MCF 10A (cell line): ENCODE measurements at regions of chr19 and their contacts with region 1.

Region 1: GRCh38 chr19:42032431-42032830 is 37.6 kb downstream of the GRIK5 start:
- DNase-seq: no peak
- H3K4me3 Mint-ChIP-seq: no peak overlapping the region
- H3K27ac Mint-ChIP-seq: no peak overlapping the region
- H3K4me1 Mint-ChIP-seq: no peaks in the 10 kb centered on the region
- H3K27me3 Mint-ChIP-seq: no peaks in the 10 kb centered on the region
- CTCF ChIP-seq: no peak

Region 2: GRCh38 chr19:41959056-41960053 is 73.1 kb before region 1 on chr19 and contains the start of gene RABAC1:
- CTCF ChIA-PET with region 1: interaction called, 5 read pairs
- POLR2A ChIA-PET with region 1: interaction called, 3 read pairs
- intact Hi-C with region 1: loop called (anchors 2 kb)
- DNase-seq: peak; percentile 89
- H3K4me3 Mint-ChIP-seq: peak within 1 kb of the TSS; percentile 74
- H3K27ac Mint-ChIP-seq: peak within 1 kb of the TSS; percentile 78
- H3K4me1 Mint-ChIP-seq: peaks cover 19% of the 10 kb centered on the region
- H3K27me3 Mint-ChIP-seq: no peaks in the 10 kb centered on the region
- CTCF ChIP-seq: peak; percentile 19
- total RNA-seq, gene RABAC1: 75.4 and 104 TPM in 2 replicates

Region 3: GRCh38 chr19:41998246-41999020 is 34.0 kb before region 1 on chr19:
- CTCF ChIA-PET with region 1: interaction called, 9 read pairs
- POLR2A ChIA-PET with region 1: no interaction called
- intact Hi-C with region 1: loop called (anchors 5 kb)
- DNase-seq: peak; percentile 23
- H3K4me3 Mint-ChIP-seq: no peak overlapping the region
- H3K27ac Mint-ChIP-seq: no peak overlapping the region
- H3K4me1 Mint-ChIP-seq: peaks cover 6% of the 10 kb centered on the region
- H3K27me3 Mint-ChIP-seq: peaks cover 89% of the 10 kb centered on the region
- CTCF ChIP-seq: peak; percentile 59

Region 4: GRCh38 chr19:42045575-42045974 is 13.1 kb after region 1 on chr19:
- CTCF ChIA-PET with region 1: interaction called, 10 read pairs
- POLR2A ChIA-PET with region 1: interaction called, 13 read pairs
- intact Hi-C with region 1: no loop called
- DNase-seq: no peak
- H3K4me3 Mint-ChIP-seq: no peak overlapping the region
- H3K27ac Mint-ChIP-seq: no peak overlapping the region
- H3K4me1 Mint-ChIP-seq: peaks cover 6% of the 10 kb centered on the region
- H3K27me3 Mint-ChIP-seq: no peaks in the 10 kb centered on the region
- CTCF ChIP-seq: no peak

Region 5: DNA sequence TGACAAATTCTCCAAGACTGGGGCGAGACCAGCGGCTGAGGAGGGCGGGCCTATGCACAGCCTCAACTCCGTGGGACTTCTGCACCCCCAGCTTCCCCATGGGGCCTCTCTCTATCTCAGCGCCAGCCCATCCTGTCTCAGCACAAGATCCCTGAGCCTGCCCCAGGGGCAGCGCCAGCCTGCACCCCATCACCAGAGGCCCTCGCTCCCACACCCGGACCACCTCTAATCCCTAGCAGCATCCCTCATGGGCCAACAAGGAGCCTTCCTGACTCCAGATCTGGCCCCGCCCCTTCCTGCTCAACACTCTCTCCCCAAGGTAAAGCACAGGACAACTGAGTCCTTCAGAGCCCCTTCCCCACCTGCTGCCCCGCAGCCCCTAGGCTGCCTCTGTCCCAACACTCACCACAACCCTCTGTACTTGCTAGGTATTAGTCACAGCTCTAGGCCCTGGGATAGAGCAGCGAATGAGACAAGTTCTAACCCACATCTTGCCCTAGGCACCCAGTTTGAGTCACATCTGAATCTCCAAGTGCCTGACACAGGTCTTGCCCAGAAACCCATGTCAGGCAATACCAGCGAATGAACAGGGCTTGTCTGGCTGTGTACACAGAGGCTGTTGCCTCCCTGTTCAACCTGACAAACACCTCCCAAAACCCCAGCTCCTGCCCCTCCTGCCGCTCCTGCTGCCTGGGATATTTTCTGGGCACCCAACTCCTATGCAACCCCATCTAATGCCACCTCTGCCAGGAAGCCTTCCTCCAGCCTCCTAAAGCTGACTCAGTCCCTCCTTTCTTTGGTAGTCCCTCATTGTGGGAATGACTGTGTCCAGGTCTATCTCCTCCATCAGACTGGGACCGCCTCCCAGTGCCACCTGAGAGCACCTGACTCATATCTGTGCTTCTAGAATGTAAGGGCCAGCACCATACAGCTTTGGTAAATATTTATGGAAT is 19.0 kb after region 1 on chr19:
- CTCF ChIA-PET with region 1: interaction called, 8 read pairs
- POLR2A ChIA-PET with region 1: interaction called, 13 read pairs
- intact Hi-C with region 1: no loop called
- DNase-seq: peak; percentile 97
- H3K4me3 Mint-ChIP-seq: peak overlapping the region; percentile 1
- H3K27ac Mint-ChIP-seq: peak overlapping the region; percentile 86
- H3K4me1 Mint-ChIP-seq: peaks cover 31% of the 10 kb centered on the region
- H3K27me3 Mint-ChIP-seq: no peaks in the 10 kb centered on the region
- CTCF ChIP-seq: no peak

Region 6: DNA sequence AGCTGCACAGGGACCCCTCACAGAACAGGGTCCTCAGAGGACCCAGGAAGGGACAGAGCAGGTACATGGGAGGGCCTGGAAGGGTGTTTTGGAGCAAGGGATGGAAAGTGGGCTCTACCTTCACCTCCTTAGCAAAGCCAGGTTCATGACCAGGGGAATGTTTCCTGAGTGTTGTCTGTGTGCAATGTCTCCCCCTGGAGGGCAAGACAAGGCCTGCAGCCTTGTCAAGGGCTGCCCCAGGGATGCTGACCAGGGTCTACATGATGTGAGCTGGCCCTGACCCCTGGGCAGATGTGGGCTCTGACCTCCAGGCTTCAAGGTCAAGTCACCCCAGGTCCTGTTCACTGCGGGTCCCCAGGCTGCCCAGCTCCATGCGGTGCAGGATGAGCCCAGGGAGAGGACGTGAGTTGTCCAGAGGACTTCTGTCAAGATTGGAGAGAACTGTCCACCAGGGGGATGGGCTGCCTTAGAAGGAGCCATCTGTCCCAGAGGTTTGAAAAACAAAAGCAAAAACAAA is 496.9 kb after region 1 on chr19:
- CTCF ChIA-PET with region 1: no interaction called
- POLR2A ChIA-PET with region 1: no interaction called
- intact Hi-C with region 1: no loop called
- DNase-seq: peak; percentile 70
- H3K4me3 Mint-ChIP-seq: no peak overlapping the region
- H3K27ac Mint-ChIP-seq: no peak overlapping the region
- H3K4me1 Mint-ChIP-seq: peaks cover 13% of the 10 kb centered on the region
- H3K27me3 Mint-ChIP-seq: no peaks in the 10 kb centered on the region
- CTCF ChIP-seq: peak; percentile 80